A673 (cell line): ENCODE measurements at regions of chrX and their contacts with region 1.

Region 1: GRCh38 chrX:104098151-104098808 is 14.0 kb upstream of the ZCCHC18 start:
- DNase-seq: peak; percentile 68
- H3K4me3 ChIP-seq: no peak overlapping the region
- H3K27ac ChIP-seq: no peak overlapping the region
- H3K4me1 ChIP-seq: no peaks in the 10 kb centered on the region
- H3K27me3 ChIP-seq: peaks cover 34% of the 10 kb centered on the region
- CTCF ChIP-seq: peak; percentile 71

Region 2: DNA sequence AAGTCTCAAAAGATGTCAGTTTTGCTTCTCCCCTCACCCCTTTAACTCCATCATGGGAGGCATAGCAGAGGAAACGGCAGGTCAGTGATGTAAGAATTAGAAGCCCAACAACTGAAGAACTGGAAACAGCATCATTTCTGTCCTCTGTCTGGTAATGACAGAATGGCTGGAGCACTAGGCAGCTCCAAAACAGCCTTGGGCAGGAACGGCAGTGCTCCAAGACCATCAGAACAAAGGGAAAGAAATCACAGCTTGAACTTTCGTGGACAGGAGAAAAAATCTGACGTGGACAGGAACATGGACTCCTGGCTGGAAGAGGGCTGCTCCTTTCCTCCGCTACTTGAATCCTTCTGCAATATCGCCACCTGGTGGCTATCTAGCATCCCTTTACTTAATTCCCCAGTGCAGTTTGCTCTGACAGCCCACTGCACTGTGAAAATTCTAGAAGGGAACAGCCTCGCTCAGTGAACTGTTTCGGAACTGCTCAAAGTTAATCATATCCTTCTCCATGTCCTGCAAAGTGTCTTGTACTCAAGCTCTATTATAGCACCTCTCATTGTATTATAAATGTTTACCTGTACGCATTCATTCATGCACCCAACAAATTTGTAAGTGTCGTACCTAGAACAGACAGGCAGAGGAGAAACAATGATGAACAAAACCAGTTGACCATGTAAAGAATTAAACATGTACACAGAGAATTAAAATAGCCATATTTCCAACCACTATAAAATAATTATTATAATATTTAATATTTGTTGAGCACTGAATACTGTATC is 38.1 kb after region 1 on chrX:
- CTCF ChIA-PET with region 1: no interaction called
- POLR2A ChIA-PET with region 1: no interaction called
- intact Hi-C with region 1: loop called (anchors 1 kb)
- DNase-seq: peak; percentile 85
- H3K4me3 ChIP-seq: no peak overlapping the region
- H3K27ac ChIP-seq: no peak overlapping the region
- H3K4me1 ChIP-seq: no peaks in the 10 kb centered on the region
- H3K27me3 ChIP-seq: peaks cover 4% of the 10 kb centered on the region
- CTCF ChIP-seq: peak; percentile 76

Region 3: GRCh38 chrX:104318330-104319009 is 220.2 kb after region 1 on chrX:
- CTCF ChIA-PET with region 1: no interaction called
- POLR2A ChIA-PET with region 1: no interaction called
- intact Hi-C with region 1: no loop called
- DNase-seq: no peak
- H3K4me3 ChIP-seq: no peak overlapping the region
- H3K27ac ChIP-seq: no peak overlapping the region
- H3K4me1 ChIP-seq: no peaks in the 10 kb centered on the region
- H3K27me3 ChIP-seq: no peaks in the 10 kb centered on the region
- CTCF ChIP-seq: no peak